ENCODE measurements at regions of chr19 and their contacts with region 1.

Region 1: DNA sequence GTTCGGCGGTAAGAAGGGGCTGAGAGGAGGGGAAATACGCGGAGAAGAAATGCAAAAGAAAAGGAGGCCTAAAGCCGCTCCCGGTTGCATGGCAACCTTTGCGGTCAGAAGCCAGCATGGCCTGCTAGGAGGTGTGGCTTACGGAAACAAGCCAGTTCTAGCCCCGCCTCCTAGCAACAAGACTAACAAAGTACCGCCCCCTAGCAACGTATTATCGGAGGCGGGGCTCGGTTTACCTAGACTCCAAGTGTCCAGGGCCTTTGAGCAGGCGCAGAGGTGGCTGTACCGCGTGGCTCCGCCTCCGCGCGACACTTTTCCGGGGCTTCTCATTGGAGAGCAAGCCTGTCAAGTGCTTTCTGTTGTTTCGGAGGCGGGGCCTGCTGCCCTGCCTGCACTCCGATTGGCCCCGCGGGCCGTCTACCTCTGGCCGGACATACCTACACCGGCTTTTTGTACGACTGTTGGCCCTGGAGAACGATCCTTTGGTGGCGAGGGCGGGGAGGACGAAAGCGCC is 337 bp upstream of the CYTH2 start:
- DNase-seq: peak; percentile 99 to 100 (median 100)
- H3K4me3 ChIP-seq: peak overlapping the region in 1 of 2 donors; percentile 65
- H3K4me3 Mint-ChIP-seq: peak overlapping the region; percentile 89 to 96 (median 92)
- H3K27ac ChIP-seq: peak overlapping the region; percentile 81
- H3K27ac Mint-ChIP-seq: peak overlapping the region; percentile 83 to 98 (median 95)
- H3K4me1 ChIP-seq: peaks cover 18% of the 10 kb centered on the region
- H3K4me1 Mint-ChIP-seq: peaks cover 7 to 24% (median 13%) of the 10 kb centered on the region in 4 donors
- H3K27me3 ChIP-seq: no peaks in the 10 kb centered on the region
- H3K27me3 Mint-ChIP-seq: no peaks in the 10 kb centered on the region

Region 2: GRCh38 chr19:48391107-48391986 is 77.5 kb before region 1 on chr19 and contains the start of gene KDELR1:
- CTCF ChIA-PET with region 1: interaction called, 3 read pairs
- POLR2A ChIA-PET with region 1: no interaction called
- intact Hi-C with region 1: loop called (anchors 2 kb)
- DNase-seq: peak; percentile 59 to 79 (median 66)
- H3K4me3 ChIP-seq: peak within 1 kb of the TSS; percentile 63 to 89
- H3K4me3 Mint-ChIP-seq: peak within 1 kb of the TSS; percentile 91 to 95 (median 94)
- H3K27ac ChIP-seq: peak within 1 kb of the TSS; percentile 93
- H3K27ac Mint-ChIP-seq: peak within 1 kb of the TSS; percentile 89 to 98 (median 95)
- H3K4me1 ChIP-seq: peaks cover 41% of the 10 kb centered on the region
- H3K4me1 Mint-ChIP-seq: peaks cover 15 to 49% (median 33%) of the 10 kb centered on the region in 4 donors
- H3K27me3 ChIP-seq: peaks cover 19% of the 10 kb centered on the region
- H3K27me3 Mint-ChIP-seq: peaks cover 6 to 19% of the 10 kb centered on the region in 2 donors
- total RNA-seq, gene KDELR1: 58.8 to 63.2 TPM

Region 3: DNA sequence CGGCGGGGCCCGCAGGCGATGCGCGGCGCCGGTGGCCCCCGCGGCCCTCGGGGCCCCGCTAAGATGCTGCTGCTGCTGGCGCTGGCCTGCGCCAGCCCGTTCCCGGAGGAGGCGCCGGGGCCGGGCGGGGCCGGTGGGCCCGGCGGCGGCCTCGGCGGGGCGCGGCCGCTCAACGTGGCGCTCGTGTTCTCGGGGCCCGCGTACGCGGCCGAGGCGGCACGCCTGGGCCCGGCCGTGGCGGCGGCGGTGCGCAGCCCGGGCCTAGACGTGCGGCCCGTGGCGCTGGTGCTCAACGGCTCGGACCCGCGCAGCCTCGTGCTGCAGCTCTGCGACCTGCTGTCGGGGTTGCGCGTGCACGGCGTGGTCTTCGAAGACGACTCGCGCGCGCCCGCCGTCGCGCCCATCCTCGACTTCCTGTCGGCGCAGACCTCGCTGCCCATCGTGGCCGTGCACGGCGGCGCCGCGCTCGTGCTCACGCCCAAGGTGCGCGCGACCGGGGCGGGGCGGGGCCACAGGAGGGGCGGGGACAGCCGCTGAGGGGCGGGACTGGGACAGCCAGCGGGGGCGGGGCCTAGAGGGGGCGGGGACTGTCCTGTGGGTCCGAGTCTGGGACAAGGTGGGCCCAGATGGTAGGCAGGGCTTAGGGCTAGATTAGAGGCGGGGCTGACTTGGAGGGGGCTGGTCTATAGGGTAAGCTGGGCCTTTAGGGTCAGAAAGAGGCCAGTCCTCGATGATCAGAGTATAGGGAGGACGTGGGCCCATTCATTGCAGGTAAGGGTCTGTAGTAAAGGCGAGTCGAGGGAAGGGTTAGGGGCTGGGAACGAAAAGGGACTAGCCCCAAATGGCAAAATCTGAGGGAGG is 70.2 kb before region 1 on chr19:
- CTCF ChIA-PET with region 1: no interaction called
- POLR2A ChIA-PET with region 1: no interaction called
- intact Hi-C with region 1: loop called (anchors 2 kb)
- DNase-seq: peak; percentile 84 to 87 (median 87)
- H3K4me3 ChIP-seq: peak overlapping the region; percentile 55 to 79
- H3K4me3 Mint-ChIP-seq: peak overlapping the region; percentile 58 to 89 (median 65)
- H3K27ac ChIP-seq: peak overlapping the region; percentile 39
- H3K27ac Mint-ChIP-seq: peak overlapping the region; percentile 62 to 92 (median 74)
- H3K4me1 ChIP-seq: peaks cover 41% of the 10 kb centered on the region
- H3K4me1 Mint-ChIP-seq: peaks cover 23 to 58% (median 44%) of the 10 kb centered on the region in 4 donors
- H3K27me3 ChIP-seq: peaks cover 23% of the 10 kb centered on the region
- H3K27me3 Mint-ChIP-seq: peaks cover 9 to 18% of the 10 kb centered on the region in 2 donors

Region 4: DNA sequence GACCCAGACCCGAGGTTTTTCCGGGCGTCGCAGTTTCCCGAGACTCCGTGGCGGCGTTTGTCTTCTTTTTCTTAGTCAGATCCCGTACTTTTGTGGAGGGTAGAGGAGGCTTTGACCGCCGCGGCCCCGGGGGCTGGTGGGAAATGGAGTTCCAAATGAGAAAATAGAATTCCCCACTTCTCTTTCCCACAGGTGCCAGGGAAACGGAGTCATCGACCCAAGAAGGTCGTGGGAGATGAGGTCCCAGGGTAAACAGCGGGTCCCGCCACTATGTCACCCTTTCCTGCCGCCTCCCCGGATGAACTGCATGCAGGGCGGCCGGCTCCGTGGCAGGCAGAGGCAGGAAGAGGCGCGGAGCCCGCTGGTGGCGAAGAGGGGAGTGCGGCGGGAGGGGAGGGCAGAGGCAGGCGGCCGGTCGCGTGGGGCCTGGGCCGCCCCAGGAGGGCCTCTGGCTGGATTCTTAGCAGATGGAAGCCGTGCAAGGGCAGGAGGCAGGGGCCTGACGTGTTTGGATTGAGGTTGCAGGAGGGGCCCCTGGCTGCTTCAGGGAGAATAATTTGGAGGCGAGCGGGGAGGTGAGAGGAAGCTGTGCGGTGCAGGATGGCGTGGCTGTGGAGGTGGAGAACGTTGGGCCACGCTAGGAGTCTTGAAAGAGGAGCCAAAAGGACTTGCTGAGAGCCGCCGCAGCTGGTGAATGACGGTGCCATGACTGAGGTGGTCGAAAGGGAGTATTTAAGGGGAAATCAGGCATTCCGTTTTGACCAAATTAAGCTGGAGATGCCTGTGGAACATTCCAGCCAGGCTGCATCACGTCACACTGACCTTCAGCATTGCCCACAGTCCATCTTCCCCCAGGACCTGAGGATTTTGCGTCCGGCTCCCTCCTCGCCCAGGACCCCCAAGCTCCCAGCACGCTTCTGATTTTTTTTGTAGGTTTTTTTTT is 12.0 kb after region 1 on chr19:
- CTCF ChIA-PET with region 1: no interaction called
- POLR2A ChIA-PET with region 1: interaction called, 20 read pairs
- intact Hi-C with region 1: loop called (anchors 1 kb)
- DNase-seq: peak; percentile 60 to 74 (median 65)
- H3K4me3 ChIP-seq: peak overlapping the region; percentile 51 to 52
- H3K4me3 Mint-ChIP-seq: peak overlapping the region; percentile 81 to 89 (median 84)
- H3K27ac ChIP-seq: peak overlapping the region; percentile 58
- H3K27ac Mint-ChIP-seq: peak overlapping the region; percentile 78 to 93 (median 85)
- H3K4me1 ChIP-seq: peaks cover 12% of the 10 kb centered on the region
- H3K4me1 Mint-ChIP-seq: peaks cover 4 to 28% (median 17%) of the 10 kb centered on the region in 4 donors
- H3K27me3 ChIP-seq: no peaks in the 10 kb centered on the region
- H3K27me3 Mint-ChIP-seq: no peaks in the 10 kb centered on the region

Region 5: GRCh38 chr19:48492925-48493717 is 24.3 kb after region 1 on chr19:
- CTCF ChIA-PET with region 1: interaction called, 13 read pairs
- POLR2A ChIA-PET with region 1: interaction called, 6 read pairs
- intact Hi-C with region 1: loop called (anchors 1 kb)
- DNase-seq: peak; percentile 75 to 87 (median 77)
- H3K4me3 ChIP-seq: peak overlapping the region in 1 of 2 donors; percentile 47
- H3K4me3 Mint-ChIP-seq: peak overlapping the region; percentile 52 to 79 (median 70)
- H3K27ac ChIP-seq: no peak overlapping the region
- H3K27ac Mint-ChIP-seq: peak overlapping the region in 5 of 7 donors; percentile 51 to 84 (median 60)
- H3K4me1 ChIP-seq: peaks cover 40% of the 10 kb centered on the region
- H3K4me1 Mint-ChIP-seq: peaks cover 15 to 53% (median 28%) of the 10 kb centered on the region in 4 donors
- H3K27me3 ChIP-seq: peaks cover 15% of the 10 kb centered on the region
- H3K27me3 Mint-ChIP-seq: peaks cover 22 to 28% of the 10 kb centered on the region in 2 donors

Region 6: DNA sequence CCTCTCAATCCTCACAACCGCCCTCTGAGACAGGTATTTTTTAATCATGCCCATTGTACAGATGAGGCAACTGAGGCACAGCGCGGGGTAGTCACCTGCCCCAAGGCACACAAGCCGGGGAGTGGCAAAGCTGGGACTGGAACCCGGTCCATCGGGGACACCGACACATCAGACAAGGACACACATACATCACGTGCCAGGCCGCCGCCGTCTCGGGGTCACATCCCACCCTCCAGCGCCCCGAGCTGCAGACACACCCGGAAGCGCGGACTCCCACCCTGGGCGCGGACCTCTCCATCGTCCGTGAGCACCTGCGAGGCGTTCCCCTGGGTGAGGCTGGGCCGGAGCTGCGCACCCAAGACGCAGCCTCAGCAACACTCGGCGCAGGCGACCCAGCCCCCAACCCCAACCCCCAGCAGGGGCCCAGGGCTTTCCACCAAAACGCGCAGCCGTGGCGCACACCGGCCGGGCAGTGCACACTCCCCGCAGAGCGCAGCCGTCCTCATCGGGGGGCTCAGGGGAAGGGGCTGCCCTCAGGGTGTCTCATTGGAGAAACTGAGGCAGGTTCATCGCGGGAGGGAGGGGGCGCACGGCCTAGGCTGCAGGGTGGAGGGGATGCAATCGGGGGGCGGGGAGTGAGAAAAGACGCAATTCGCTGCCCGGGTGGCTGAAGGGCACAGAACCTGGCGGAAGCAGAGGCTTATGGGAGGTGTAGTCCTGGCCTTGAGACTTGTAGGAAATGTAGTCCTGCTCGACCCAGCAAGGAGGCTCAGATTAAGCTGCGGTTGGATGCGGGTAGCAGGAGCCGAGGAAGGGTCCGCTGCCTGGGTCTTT is 44.7 kb after region 1 on chr19:
- CTCF ChIA-PET with region 1: no interaction called
- POLR2A ChIA-PET with region 1: no interaction called
- intact Hi-C with region 1: loop called (anchors 1 kb)
- DNase-seq: peak; percentile 70 to 88 (median 73)
- H3K4me3 ChIP-seq: peak overlapping the region; percentile 65 to 89
- H3K4me3 Mint-ChIP-seq: no peak overlapping the region
- H3K27ac ChIP-seq: peak overlapping the region; percentile 59
- H3K27ac Mint-ChIP-seq: peak overlapping the region in 3 of 7 donors; percentile 68 to 96 (median 91)
- H3K4me1 ChIP-seq: peaks cover 27% of the 10 kb centered on the region
- H3K4me1 Mint-ChIP-seq: peaks cover 6 to 16% (median 11%) of the 10 kb centered on the region in 4 donors
- H3K27me3 ChIP-seq: no peaks in the 10 kb centered on the region
- H3K27me3 Mint-ChIP-seq: no peaks in the 10 kb centered on the region